GM18951 (cell line): ENCODE measurements at regions of chr1 and their contacts with region 1.

Region 1: GRCh38 chr1:181166377-181167196 is 78.1 kb downstream of the IER5 start:
- POLR2A ChIP-seq: no peak

Region 2: DNA sequence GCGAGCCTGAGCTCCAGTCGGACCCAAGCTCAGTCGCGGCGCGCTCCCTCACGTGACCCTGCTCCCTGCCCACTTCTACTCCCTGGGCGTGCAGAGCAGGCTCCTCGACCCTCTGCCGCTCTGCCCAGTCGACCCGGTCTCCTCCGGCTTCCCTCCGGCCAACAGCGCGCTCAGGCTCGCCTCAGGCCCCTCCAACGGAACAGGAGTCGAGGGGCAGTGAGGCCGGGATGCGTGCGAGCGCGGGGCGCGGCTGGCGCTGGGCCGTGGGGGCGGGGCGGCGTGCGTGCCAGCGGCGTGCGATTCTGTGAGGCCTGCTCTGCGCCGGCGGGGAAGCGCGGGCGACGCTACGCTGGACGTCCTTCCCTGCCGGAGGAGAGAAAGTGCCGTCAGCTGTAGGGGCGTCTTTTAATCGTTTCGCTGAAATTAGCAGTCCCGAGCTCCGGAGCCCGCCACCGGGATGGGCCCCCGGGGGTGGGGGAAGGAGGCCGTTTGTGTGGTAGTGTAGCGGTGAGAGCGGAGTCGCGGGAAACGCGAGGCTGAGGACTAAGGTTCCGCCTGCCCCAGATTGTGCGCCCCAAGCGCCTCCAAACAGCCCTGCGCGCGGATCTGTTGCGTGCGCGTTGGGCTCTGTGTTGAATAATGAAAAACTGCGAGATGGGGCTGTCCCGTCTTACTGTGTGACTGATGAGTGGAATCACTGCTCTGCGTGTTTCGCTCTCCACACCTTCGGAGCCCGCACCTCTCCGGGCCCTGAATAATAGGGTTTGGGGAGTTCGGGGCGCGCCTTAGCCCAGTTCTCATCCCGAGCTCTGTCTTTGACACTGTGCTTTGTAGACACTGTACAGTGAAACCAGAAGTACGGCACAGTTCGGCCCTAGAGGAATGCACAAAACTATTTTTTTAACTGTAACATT is 664.0 kb before region 1 on chr1 and contains the start of gene ACBD6:
- in situ Hi-C with region 1: loop called (anchors 25 kb)
- POLR2A ChIP-seq: peak; percentile 84

Region 3: GRCh38 chr1:180912801-180913565 is 253.6 kb before region 1 on chr1 and contains the start of gene KIAA1614:
- in situ Hi-C with region 1: loop called (anchors 10 kb)
- POLR2A ChIP-seq: peak; percentile 56

Region 4: DNA sequence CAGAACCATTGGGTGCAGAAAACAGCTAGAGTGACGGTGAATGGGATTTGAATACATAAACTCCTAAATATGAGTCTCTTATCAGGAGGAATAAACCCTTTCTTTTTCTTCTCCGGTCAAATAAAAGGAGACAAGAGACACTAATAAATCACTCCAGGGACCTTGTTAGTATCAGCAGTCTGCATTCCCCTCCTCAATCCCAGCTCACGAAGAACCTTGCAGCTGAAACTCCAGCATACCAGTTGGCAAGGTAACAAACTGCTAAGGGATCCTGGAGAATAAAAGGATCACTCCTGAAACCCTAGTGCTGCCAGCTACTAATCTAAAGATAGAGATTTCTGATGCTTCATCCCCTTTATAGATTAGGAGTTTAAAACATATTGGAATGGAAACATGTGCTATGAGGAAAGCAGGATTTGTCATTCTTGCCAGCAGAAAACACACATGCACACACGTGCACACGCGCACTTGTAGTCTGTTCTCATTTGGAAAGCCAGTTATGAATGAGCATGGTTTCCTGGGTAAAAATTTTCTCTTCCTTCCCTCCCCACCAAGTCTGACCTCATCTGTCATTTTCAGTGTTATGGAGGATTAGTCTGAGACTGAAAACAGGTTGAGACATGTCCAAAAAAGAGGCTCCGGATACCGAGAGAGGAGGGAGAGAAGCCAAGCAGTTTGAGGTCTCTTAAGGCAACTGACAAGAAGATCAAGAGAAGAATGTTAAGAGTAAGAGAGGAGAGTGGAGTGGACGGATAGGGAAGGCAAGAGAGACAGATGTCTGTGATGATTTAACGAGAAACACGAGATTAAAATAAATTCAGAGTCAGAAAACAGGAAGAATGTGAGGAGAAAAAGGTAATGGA is 67.2 kb before region 1 on chr1:
- in situ Hi-C with region 1: no loop called
- POLR2A ChIP-seq: no peak